Activated CD4-positive, alpha-beta T cell treated with anti-CD3 and anti-CD28 coated beads, Interleukin-2, amount 10 ng/mL, durations not matched to agents 7 days and 5 days (primary cell): ENCODE measurements at regions of chr6 and their contacts with region 1.

Region 1: GRCh38 chr6:11711003-11711983 is 67.3 kb downstream of the ADTRP start:
- DNase-seq: peak; percentile 28
- H3K4me3 Mint-ChIP-seq: peak overlapping the region; percentile 5
- H3K27ac Mint-ChIP-seq: peak overlapping the region; percentile 93
- H3K4me1 Mint-ChIP-seq: peaks cover 66% of the 10 kb centered on the region
- H3K27me3 Mint-ChIP-seq: no peaks in the 10 kb centered on the region

Region 2: DNA sequence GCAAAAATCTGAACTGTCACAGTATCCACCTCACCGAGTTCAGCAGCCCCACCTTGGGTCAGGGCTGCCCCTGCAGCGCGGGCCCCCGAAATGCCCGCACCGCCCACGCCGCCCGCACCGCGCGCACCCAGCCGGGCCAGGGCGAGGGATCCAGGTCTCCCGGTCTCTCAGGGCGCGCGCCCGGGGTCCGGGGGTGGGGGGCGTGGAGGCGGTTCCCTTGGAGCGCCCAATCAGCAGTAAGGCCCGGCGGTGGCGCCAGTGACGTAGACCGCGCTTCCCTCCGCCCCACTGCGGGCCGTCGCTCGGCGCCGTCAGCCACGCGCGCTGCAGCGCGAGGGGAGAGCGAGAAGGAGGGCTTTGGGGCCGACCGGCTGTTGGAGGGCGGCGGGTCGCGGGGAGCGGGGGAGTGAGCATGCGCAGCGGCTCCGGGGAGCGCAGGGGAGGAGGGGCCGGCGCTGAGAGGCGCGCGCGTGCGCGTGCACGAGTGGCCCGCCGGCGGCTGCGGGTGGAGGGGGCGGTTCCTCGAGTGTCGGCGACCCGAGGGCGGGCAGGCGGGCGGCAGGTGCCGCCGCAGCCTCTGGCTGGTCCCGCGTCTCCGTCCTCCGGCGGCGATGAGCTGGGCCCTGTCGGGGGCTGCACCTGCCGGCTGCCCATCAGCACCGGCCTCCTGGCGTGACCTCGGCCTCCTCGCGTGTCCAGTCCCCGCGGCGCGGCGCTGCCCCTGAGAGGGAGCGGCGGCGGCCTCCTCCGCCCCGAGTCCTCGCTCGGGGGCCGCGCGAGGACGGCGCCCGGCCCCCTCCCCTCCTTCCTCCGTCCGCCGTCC is 173.9 kb before region 1 on chr6 and contains the start of gene TMEM170B:
- CTCF ChIA-PET with region 1: no interaction called
- POLR2A ChIA-PET with region 1: no interaction called
- DNase-seq: peak; percentile 93
- H3K4me3 Mint-ChIP-seq: peak within 1 kb of the TSS; percentile 77
- H3K27ac Mint-ChIP-seq: peak within 1 kb of the TSS; percentile 68
- H3K4me1 Mint-ChIP-seq: peaks cover 14% of the 10 kb centered on the region
- H3K27me3 Mint-ChIP-seq: peaks cover 35% of the 10 kb centered on the region
- total RNA-seq, gene TMEM170B: 0.81 to 0.82 TPM

Region 3: DNA sequence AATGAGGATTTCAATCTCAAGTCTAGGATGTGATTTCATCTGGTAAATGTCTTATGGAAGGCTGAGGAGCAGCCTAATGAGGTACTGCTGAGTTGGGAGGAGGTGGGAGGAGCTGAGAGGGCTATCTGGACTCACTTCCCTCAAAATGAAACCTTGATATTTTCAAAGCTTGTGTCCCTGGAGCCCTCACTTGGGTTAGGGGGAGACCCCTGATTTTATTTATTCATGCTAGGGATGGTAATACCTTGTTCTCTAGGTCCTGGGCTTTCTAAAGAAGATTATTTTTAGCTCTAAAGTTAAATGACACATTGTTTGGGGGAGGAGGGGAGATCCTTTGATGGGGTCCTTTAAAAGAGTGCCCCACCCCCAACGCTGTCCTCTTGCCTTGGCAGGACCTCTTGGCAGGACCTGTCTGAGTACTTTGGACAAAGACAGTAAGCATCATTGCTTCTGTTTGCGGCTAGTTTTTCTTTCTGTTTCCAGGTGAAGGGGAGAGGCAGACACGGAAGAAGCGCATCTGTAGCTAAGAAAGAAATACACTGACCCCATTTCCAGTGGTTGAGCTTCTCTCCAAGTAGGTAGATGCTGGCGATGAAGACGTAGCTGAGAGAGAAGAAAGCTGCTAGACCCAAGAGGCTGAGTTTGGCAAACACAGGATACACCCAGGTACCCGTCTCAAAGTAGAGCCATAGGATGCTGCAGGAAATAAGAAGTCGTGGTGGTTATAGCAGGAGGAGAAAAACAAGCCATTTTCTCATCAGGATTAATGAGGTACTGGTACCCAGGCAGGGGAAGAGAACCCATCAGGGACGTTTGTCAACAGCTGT is 11.7 kb after region 1 on chr6:
- CTCF ChIA-PET with region 1: interaction called, 16 read pairs
- POLR2A ChIA-PET with region 1: no interaction called
- DNase-seq: no peak
- H3K4me3 Mint-ChIP-seq: no peak overlapping the region
- H3K27ac Mint-ChIP-seq: peak overlapping the region; percentile 51
- H3K4me1 Mint-ChIP-seq: peaks cover 43% of the 10 kb centered on the region
- H3K27me3 Mint-ChIP-seq: no peaks in the 10 kb centered on the region